Mammary epithelial cell (primary cell): ENCODE measurements at regions of chr13 and their contacts with region 1.

Region 1: DNA sequence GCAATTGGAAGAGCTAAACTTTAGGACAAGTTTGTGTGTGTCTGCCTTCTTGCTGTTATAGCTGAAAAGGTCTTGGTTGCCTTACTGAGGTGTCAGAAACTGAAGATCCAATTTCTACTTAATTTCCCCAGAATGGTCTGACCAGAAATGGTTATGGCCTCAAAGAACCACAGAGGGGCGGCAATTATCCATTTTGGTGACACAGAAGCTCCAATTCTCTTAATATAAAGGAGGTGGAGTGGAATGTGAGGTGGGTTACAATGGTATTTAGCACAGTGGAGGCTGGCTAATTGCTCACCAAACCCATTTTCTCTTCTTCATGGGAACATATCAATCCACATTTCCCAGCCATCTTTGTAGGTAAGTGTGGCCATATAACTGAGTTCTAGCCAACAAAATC is 1157.2 kb downstream of the OLFM4 start:
- DNase-seq: no peak
- H3K4me3 ChIP-seq: no peak overlapping the region
- H3K27ac ChIP-seq: no peak overlapping the region
- H3K4me1 ChIP-seq: no peaks in the 10 kb centered on the region
- H3K27me3 ChIP-seq: no peaks in the 10 kb centered on the region
- CTCF ChIP-seq: peak; percentile 26 to 45

Region 2: DNA sequence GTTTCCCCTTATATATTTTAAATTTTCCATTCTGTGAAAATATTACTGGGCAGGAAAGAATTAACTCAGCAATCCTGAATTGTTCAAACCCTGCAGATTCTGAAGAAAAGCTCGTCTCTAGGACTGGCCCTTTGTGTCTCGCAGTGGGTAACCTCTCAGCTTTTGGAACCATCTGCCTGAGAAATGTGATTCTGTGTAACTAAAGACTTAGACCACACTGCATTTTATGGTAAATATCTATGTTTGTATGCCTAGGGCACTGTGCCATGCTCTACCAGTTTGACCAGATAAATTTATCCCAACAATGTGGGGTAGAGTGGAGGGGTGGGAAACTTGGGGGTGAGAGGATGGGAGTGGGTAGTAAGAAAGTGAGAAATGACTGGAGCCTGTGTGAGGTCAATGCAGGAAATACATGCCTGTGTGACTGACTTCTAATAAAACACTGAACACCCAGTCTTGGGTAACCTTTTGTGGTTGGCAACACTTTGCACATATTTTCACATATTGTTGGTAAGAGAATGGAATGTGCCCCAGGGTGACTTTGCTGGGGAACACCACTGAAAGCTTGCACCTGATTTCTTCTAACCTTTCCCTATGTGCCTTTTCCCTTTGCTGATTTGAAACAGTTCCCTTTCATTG is 24.7 kb after region 1 on chr13:
- CTCF ChIA-PET with region 1: interaction called, 11 read pairs
- dilution Hi-C with region 1: no loop called
- in situ Hi-C with region 1: no loop called
- intact Hi-C with region 1: no loop called
- DNase-seq: peak; percentile 24
- H3K4me3 ChIP-seq: no peak overlapping the region
- H3K27ac ChIP-seq: no peak overlapping the region
- H3K4me1 ChIP-seq: peaks cover 3% of the 10 kb centered on the region
- H3K27me3 ChIP-seq: no peaks in the 10 kb centered on the region
- CTCF ChIP-seq: no peak